MCF 10A (cell line): ENCODE measurements at regions of chr6 and their contacts with region 1.

Region 1: GRCh38 chr6:74598473-74599393 is 607.1 kb downstream of the COL12A1 start:
- DNase-seq: peak; percentile 40
- H3K4me3 Mint-ChIP-seq: no peak overlapping the region
- H3K27ac Mint-ChIP-seq: peak overlapping the region; percentile 36
- H3K4me1 Mint-ChIP-seq: peaks cover 20% of the 10 kb centered on the region
- H3K27me3 Mint-ChIP-seq: no peaks in the 10 kb centered on the region
- CTCF ChIP-seq: no peak

Region 2: DNA sequence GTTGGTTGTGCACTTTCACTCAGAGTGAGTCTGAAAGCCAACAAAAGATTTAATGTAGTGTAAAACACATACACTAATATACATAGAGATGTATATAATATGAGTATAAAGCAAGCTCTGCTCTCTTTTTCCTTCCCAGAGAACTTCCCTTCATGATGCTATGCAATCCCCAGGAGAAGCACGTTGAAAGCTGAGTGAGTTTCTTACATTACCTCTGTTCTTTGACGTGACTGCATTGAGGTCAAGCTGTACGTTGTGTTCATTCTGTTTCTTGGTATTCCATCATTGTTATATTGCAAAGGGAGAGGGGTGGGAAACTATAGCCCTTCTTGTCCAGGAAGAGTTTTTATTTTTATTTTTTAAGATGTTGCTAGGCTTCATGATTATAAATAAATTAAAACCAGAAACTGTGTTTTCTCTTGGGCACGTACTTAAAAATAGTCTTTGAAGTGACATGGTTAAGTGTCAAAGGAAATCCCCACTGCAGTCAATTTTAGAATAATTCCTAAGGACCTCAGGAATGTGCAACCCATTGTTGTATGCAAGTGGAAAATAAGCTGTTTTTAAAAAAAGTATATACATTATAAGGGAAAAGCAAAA is 251.7 kb before region 1 on chr6:
- CTCF ChIA-PET with region 1: no interaction called
- POLR2A ChIA-PET with region 1: no interaction called
- intact Hi-C with region 1: no loop called
- DNase-seq: no peak
- H3K4me3 Mint-ChIP-seq: no peak overlapping the region
- H3K27ac Mint-ChIP-seq: no peak overlapping the region
- H3K4me1 Mint-ChIP-seq: no peaks in the 10 kb centered on the region
- H3K27me3 Mint-ChIP-seq: no peaks in the 10 kb centered on the region
- CTCF ChIP-seq: no peak

Region 3: GRCh38 chr6:74534465-74535211 is 64.1 kb before region 1 on chr6:
- CTCF ChIA-PET with region 1: no interaction called
- POLR2A ChIA-PET with region 1: no interaction called
- intact Hi-C with region 1: loop called (anchors 2 kb)
- DNase-seq: peak; percentile 69
- H3K4me3 Mint-ChIP-seq: no peak overlapping the region
- H3K27ac Mint-ChIP-seq: peak overlapping the region; percentile 85
- H3K4me1 Mint-ChIP-seq: peaks cover 11% of the 10 kb centered on the region
- H3K27me3 Mint-ChIP-seq: no peaks in the 10 kb centered on the region
- CTCF ChIP-seq: no peak

Region 4: DNA sequence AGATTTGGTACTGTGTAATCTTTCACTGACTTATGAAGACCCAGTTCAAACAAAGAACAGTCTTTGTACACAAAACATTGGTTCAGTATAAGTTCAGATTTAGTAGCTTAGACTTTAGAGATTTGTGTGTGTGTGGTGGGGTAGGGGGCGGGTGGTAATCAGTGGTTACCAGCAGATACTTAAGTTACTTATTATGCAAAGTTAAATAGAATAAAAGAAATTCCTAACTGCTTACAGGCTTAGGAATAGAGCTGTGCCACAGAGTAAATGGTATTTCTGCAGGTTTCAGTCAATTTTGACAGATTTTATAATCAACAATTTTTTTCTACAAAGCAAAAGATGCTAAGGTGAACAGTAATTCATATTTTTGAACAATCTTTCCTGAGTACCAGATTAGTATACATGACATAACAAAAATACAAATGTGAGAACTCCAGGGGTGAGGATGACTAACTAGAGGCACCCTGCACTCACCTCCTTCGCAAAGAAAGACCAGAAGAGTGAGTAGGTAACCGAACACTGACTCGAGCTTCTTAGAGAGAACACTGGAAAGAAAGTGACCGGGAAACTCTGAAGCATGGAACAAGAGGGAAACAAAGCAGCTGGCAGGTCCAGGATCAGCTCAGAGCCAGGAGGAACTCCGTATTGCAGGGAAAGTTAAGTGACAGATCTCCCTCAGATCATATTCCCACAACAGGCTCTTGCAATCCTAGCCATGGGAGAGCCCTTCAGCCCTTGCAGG is 46.5 kb after region 1 on chr6:
- CTCF ChIA-PET with region 1: no interaction called
- POLR2A ChIA-PET with region 1: no interaction called
- intact Hi-C with region 1: no loop called
- DNase-seq: no peak
- H3K4me3 Mint-ChIP-seq: no peak overlapping the region
- H3K27ac Mint-ChIP-seq: no peak overlapping the region
- H3K4me1 Mint-ChIP-seq: peaks cover 5% of the 10 kb centered on the region
- H3K27me3 Mint-ChIP-seq: no peaks in the 10 kb centered on the region
- CTCF ChIP-seq: no peak